ENCODE measurements at regions of chr19 and their contacts with region 1.

Region 1: DNA sequence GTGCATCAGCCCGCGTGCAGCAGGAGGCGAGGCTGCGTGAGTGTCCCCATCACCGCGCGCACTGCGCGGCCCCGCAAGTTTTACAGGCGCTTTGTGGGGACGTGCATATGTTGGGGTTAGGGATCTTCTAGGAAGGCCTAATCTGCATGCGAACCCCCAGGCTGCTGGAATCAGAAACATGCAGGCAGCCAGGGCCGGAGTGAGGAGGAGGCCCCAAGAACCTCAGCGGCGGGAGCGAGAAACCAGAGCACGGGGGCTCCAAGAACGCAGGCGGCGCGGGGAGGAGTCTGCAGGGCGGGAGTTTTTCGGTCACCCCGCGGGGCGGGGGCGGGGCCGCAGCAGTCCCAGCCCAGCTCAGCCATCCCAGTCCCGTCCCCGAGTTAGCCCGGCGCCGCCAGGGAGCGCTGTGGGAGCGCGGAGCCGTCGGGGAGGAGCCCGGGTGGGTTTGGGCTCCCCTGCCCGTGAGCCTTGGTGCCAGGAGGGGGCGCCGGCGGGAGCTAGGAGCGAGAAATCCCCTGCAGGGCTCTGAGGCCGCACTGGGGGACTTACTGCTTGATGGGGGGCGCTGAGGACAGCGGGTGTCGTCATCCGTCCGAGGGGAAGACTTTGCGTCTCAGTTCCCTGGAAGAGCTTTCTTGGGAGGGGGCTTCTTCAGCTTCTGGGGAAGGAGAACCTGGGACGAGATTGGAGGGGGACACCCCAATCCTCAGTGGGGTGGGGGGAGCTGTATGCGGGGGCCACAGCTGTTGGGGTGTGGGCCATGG is 933 bp upstream of the NRTN start:
- DNase-seq: peak; percentile 10
- H3K4me3 ChIP-seq: peak overlapping the region; percentile 49
- CTCF ChIP-seq: peak; percentile 100

Region 2: GRCh38 chr19:5680437-5681368 is 123.2 kb before region 1 on chr19 and contains the starts of genes HSD11B1L and MICOS13:
- CTCF ChIA-PET with region 1: no interaction called
- POLR2A ChIA-PET with region 1: no interaction called
- DNase-seq: peak; percentile 91
- H3K4me3 ChIP-seq: peak within 1 kb of the TSS; percentile 98
- CTCF ChIP-seq: no peak

Region 3: DNA sequence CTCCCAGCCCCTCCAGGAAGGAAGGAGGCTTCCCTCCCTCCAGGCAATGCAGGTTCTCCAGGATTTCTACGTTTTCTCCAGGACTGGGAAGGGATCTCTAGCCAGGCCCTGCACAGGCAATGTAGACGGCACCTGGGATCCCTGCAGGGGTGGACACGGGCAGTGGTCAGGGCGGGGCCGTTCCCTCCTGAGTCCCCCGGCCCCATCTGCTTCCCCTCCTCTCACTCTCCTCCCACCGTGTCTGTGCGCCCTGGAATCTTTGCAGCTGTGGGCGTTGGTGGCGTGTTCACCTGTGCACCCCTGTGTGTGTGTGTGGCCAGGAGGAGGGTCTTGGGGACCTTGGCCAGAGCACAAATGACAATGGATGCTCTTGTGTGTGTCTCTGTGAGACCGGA is 10.9 kb after region 1 on chr19:
- CTCF ChIA-PET with region 1: interaction called, 27 read pairs
- POLR2A ChIA-PET with region 1: no interaction called
- DNase-seq: no peak
- H3K4me3 ChIP-seq: no peak overlapping the region
- CTCF ChIP-seq: no peak

Region 4: GRCh38 chr19:5880604-5881078 is 76.7 kb after region 1 on chr19:
- CTCF ChIA-PET with region 1: interaction called, 38 read pairs
- POLR2A ChIA-PET with region 1: no interaction called
- DNase-seq: peak; percentile 54
- H3K4me3 ChIP-seq: no peak overlapping the region
- CTCF ChIP-seq: no peak

Region 5: GRCh38 chr19:5904352-5905113 is 100.6 kb after region 1 on chr19 and contains the start of gene VMAC:
- CTCF ChIA-PET with region 1: interaction called, 41 read pairs
- POLR2A ChIA-PET with region 1: interaction called, 10 read pairs
- DNase-seq: peak; percentile 100
- H3K4me3 ChIP-seq: peak within 1 kb of the TSS; percentile 100
- CTCF ChIP-seq: no peak

Region 6: GRCh38 chr19:5977785-5978605 is 174.1 kb after region 1 on chr19 and contains the start of gene RANBP3:
- CTCF ChIA-PET with region 1: interaction called, 14 read pairs
- POLR2A ChIA-PET with region 1: no interaction called
- DNase-seq: peak; percentile 91
- H3K4me3 ChIP-seq: peak within 1 kb of the TSS; percentile 93
- CTCF ChIP-seq: no peak